ENCODE measurements at regions of chr4 and their contacts with region 1.

Region 1: GRCh38 chr4:185124006-185124405 is 19.1 kb upstream of the SLC25A4 start:
- DNase-seq: no peak
- ATAC-seq: no peak
- H3K4me3 Mint-ChIP-seq: no peak overlapping the region
- H3K27ac Mint-ChIP-seq: no peak overlapping the region
- H3K4me1 Mint-ChIP-seq: peaks cover 16% of the 10 kb centered on the region
- H3K27me3 Mint-ChIP-seq: peaks cover 26% of the 10 kb centered on the region
- CTCF ChIP-seq: no peak

Region 2: GRCh38 chr4:185099024-185099682 is 24.9 kb before region 1 on chr4:
- CTCF ChIA-PET with region 1: no interaction called
- POLR2A ChIA-PET with region 1: no interaction called
- intact Hi-C with region 1: no loop called
- DNase-seq: no peak
- ATAC-seq: no peak
- H3K4me3 Mint-ChIP-seq: no peak overlapping the region
- H3K27ac Mint-ChIP-seq: no peak overlapping the region
- H3K4me1 Mint-ChIP-seq: no peaks in the 10 kb centered on the region
- H3K27me3 Mint-ChIP-seq: peaks cover 21% of the 10 kb centered on the region
- CTCF ChIP-seq: no peak

Region 3: DNA sequence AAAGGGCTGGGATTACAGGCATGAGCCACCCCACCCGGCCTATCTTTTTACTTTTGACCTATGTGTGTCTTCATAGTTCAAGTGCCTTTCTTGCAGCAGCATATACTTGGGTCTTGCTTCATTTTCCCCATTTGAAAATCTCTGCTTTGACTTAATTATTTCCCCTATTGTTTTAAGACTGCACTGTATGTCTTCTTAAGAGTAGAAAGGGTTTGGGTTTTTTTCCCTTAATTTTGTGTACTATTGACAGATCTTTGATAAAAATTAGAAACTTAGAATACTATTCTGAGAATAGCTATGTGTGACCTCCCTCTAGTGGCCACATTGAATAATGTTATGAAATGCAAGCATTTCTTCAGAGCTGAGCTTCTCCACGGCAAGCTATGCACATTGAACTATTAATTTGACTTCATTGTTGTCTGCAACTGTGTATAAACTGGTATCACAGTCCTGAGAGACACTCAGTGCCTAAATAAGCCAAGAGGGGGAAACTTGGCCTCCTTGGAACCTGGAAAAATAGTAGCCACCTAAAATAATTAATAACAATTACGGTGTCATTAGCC is 10.4 kb after region 1 on chr4:
- CTCF ChIA-PET with region 1: interaction called, 10 read pairs
- POLR2A ChIA-PET with region 1: no interaction called
- intact Hi-C with region 1: no loop called
- DNase-seq: no peak
- ATAC-seq: peak; percentile 56
- H3K4me3 Mint-ChIP-seq: no peak overlapping the region
- H3K27ac Mint-ChIP-seq: no peak overlapping the region
- H3K4me1 Mint-ChIP-seq: no peaks in the 10 kb centered on the region
- H3K27me3 Mint-ChIP-seq: peaks cover 9% of the 10 kb centered on the region
- CTCF ChIP-seq: no peak